K562 (cell line): ENCODE measurements at regions of chrX and their contacts with region 1.

Region 1: DNA sequence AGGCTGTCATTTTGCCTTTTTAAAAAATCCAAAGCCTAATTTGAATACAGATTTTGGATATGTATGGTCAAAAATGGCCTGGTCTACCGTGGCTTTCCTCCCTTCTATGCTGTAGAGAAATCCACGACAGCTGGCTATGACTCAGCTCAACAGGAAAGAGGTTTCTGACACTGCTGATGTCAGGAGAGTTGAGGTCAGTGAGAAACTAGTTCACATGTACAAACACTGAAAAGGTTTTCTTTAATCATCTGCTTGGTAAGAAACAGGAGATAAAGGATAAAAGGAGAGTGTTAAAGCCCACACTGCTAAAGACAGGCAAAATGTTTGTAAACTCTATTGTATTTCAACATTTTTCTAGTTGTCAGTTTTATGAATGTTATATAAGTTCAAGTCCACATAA is 113.9 kb downstream of the NYX start:
- DNase-seq: peak; percentile 6 to 68 (median 18)
- ATAC-seq: peak; percentile 92
- H3K4me3 ChIP-seq: no peak overlapping the region
- H3K27ac ChIP-seq: peak overlapping the region; percentile 15; the same call in 2 of the 3 replicates
- H3K4me1 ChIP-seq: peaks cover 0 to 5% of the 10 kb centered on the region in 2 experiments; a peak in 3 of 5 replicates
- H3K27me3 ChIP-seq: no peaks in the 10 kb centered on the region
- CTCF ChIP-seq: no peak
- EP300 ChIP-seq: no peak
- POLR2A ChIP-seq: no peak
- RAD21 ChIP-seq: peak in 1 of 2 experiments; percentile 2; a peak in 1 of 4 replicates

Region 2: GRCh38 chrX:39725928-39726619 is 1835.0 kb before region 1 on chrX:
- CTCF ChIA-PET with region 1: no interaction called
- POLR2A ChIA-PET with region 1: no interaction called
- in situ Hi-C with region 1: no loop called
- intact Hi-C with region 1: no loop called
- DNase-seq: no peak
- ATAC-seq: no peak
- H3K4me3 ChIP-seq: no peak overlapping the region
- H3K27ac ChIP-seq: no peak overlapping the region
- H3K4me1 ChIP-seq: peaks cover 7 to 9% of the 10 kb centered on the region in 2 experiments; a peak in 4 of 5 replicates
- H3K27me3 ChIP-seq: no peaks in the 10 kb centered on the region
- CTCF ChIP-seq: no peak
- EP300 ChIP-seq: no peak
- POLR2A ChIP-seq: no peak
- RAD21 ChIP-seq: no peak

Region 3: GRCh38 chrX:41734530-41734929 is 173.5 kb after region 1 on chrX:
- CTCF ChIA-PET with region 1: interaction called, 4 read pairs
- POLR2A ChIA-PET with region 1: no interaction called
- in situ Hi-C with region 1: no loop called
- intact Hi-C with region 1: loop called (anchors 1 kb)
- DNase-seq: peak in 2 of 4 experiments; percentile 6 to 37
- ATAC-seq: peak; percentile 81
- H3K4me3 ChIP-seq: no peak overlapping the region
- H3K27ac ChIP-seq: no peak overlapping the region
- H3K4me1 ChIP-seq: peaks cover 0 to 5% of the 10 kb centered on the region in 2 experiments; a peak in 2 of 5 replicates
- H3K27me3 ChIP-seq: no peaks in the 10 kb centered on the region
- CTCF ChIP-seq: peak; percentile 43 to 54 (median 51); a peak in 4 of 6 replicates
- EP300 ChIP-seq: no peak
- POLR2A ChIP-seq: no peak
- RAD21 ChIP-seq: peak; percentile 39 to 64; a peak in 3 of 4 replicates

Region 4: DNA sequence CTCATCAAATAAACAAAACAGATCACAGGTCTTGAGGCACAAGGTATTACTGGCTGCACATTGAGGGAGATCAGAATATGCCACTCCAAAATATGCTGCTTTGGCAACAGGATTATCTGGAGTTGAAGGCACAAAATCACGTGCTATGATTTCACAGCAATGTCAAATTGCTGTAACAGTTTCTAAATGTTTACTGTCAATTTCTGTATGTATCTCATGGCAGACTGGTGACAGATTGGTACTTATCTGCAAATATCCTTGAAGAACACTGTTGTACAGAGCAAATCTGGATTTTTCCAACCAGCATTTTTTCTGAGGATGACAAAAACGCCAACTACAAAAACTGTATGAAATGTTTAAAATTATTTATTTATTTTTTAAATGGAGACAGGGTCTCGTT is 189.7 kb after region 1 on chrX:
- CTCF ChIA-PET with region 1: interaction called, 4 read pairs
- POLR2A ChIA-PET with region 1: no interaction called
- in situ Hi-C with region 1: loop called (anchors 5 kb)
- intact Hi-C with region 1: no loop called
- DNase-seq: no peak
- ATAC-seq: no peak
- H3K4me3 ChIP-seq: no peak overlapping the region
- H3K27ac ChIP-seq: no peak overlapping the region
- H3K4me1 ChIP-seq: no peaks in the 10 kb centered on the region
- H3K27me3 ChIP-seq: no peaks in the 10 kb centered on the region
- CTCF ChIP-seq: no peak
- EP300 ChIP-seq: no peak
- POLR2A ChIP-seq: no peak
- RAD21 ChIP-seq: no peak

Region 5: DNA sequence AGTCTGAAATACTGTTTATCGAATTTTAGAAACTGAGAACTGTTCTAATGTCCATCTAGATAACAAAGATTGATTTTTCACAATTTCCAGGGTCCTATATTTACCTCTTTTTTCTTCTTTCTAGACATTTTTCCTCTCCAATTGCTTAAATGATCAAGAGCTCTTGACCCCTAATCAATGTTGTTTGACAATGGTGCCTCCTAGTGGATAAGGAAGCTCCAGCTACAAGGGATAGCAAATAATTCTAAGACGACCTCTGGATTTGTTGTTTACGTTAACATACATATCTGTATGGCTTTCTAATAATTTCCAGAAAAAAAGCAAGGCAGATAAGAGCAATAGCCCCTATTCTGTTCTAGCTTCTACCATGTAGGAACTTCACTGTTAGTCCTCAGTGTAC is 198.8 kb after region 1 on chrX:
- CTCF ChIA-PET with region 1: interaction called, 8 read pairs
- POLR2A ChIA-PET with region 1: no interaction called
- in situ Hi-C with region 1: no loop called
- intact Hi-C with region 1: loop called (anchors 1 kb)
- DNase-seq: peak; percentile 6 to 53 (median 14)
- ATAC-seq: peak; percentile 61; the same call in 2 of the 3 replicates
- H3K4me3 ChIP-seq: no peak overlapping the region
- H3K27ac ChIP-seq: no peak overlapping the region
- H3K4me1 ChIP-seq: no peaks in the 10 kb centered on the region
- H3K27me3 ChIP-seq: no peaks in the 10 kb centered on the region
- CTCF ChIP-seq: peak; percentile 42 to 68 (median 53); a peak in 5 of 6 replicates
- EP300 ChIP-seq: no peak
- POLR2A ChIP-seq: no peak
- RAD21 ChIP-seq: peak; percentile 76 to 81